ENCODE measurements at regions of chr22 and their contacts with region 1.

Region 1: GRCh38 chr22:27134315-27134701 is 476.9 kb downstream of the MIAT start:
- DNase-seq: peak; percentile 89
- H3K4me3 ChIP-seq: no peak overlapping the region
- H3K27ac ChIP-seq: no peak overlapping the region
- H3K4me1 ChIP-seq: peaks cover 22% of the 10 kb centered on the region
- H3K27me3 ChIP-seq: no peaks in the 10 kb centered on the region
- CTCF ChIP-seq: no peak

Region 2: GRCh38 chr22:26672590-26673468 is 461.5 kb before region 1 on chr22:
- CTCF ChIA-PET with region 1: no interaction called
- dilution Hi-C with region 1: no loop called
- in situ Hi-C with region 1: no loop called
- intact Hi-C with region 1: loop called (anchors 10 kb)
- DNase-seq: peak; percentile 90
- H3K4me3 ChIP-seq: peak overlapping the region; percentile 61 to 71 (median 65)
- H3K27ac ChIP-seq: peak overlapping the region; percentile 98
- H3K4me1 ChIP-seq: peaks cover 35% of the 10 kb centered on the region
- H3K27me3 ChIP-seq: no peaks in the 10 kb centered on the region
- CTCF ChIP-seq: peak; percentile 36 to 63

Region 3: DNA sequence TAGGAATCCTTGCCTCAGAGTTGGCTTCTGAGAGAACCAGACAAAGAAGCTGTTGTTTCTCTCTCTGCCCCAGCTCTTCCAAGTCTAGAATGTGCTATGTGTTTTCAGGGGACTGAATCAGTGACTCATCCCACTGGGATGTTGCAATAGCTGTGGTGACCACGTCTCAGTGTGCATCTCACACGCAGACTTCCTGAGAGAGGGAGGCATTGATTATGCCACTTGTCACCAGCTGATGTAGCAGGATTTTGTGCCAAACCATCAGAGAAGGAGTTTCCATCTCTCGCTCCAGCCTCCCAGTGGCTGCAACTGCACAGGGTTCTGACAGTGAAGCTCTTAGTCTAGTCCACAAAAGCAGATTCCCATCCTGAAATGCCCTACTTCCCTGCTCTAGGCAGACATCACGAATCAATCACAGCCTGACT is 21.1 kb before region 1 on chr22:
- CTCF ChIA-PET with region 1: interaction called, 4 read pairs
- dilution Hi-C with region 1: no loop called
- in situ Hi-C with region 1: no loop called
- intact Hi-C with region 1: loop called (anchors 1 kb)
- DNase-seq: peak; percentile 95
- H3K4me3 ChIP-seq: no peak overlapping the region
- H3K27ac ChIP-seq: no peak overlapping the region
- H3K4me1 ChIP-seq: no peaks in the 10 kb centered on the region
- H3K27me3 ChIP-seq: peaks cover 16% of the 10 kb centered on the region
- CTCF ChIP-seq: no peak